ENCODE measurements at regions of chr9 and their contacts with region 1.

Region 1: DNA sequence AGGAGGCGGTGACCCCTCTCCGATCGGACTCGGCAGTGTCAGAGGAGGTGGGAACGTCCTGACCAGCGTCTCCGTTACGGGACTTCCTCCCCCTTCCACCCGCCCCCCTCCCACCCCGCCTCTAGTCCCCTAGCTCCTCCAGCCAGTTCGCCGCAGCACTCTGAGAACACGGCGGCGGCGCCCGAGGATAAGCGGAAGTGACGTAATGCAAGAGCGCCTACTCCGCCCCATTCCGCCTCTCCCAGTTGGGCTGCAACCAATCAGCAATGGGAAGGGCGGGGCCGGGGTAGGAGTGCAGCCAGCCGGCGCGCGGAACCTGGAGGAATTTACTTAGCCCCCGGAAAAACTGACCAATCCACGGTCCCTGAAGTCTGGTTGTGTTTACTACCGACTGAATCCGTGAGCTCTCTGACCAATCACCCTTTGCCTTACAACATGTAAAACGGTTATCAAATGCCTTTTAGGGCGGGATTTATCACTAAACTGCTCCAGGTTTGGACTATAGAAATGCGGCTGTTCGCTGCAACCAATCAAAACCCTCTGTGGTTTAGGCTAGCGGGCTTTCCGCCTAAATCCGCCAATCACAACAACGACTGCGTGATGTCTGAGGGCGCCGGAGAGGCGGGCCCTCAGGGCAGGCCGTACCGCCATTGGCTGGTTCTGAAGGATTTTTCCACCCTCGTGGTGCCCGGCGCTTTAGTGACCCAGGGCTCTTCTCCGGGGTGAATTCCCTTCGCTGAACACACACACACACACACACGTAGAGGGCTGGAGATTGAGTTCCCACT is at the start of gene ZBTB5:
- DNase-seq: peak; percentile 99
- H3K4me3 Mint-ChIP-seq: peak within 1 kb of the TSS; percentile 99
- H3K27ac Mint-ChIP-seq: peak within 1 kb of the TSS; percentile 98
- H3K4me1 Mint-ChIP-seq: peaks cover 35% of the 10 kb centered on the region
- H3K27me3 Mint-ChIP-seq: no peaks in the 10 kb centered on the region
- total RNA-seq, gene ZBTB5: 9.2 and 9.5 TPM in 2 replicates

Region 2: GRCh38 chr9:36991516-36992134 is 473.8 kb before region 1 on chr9:
- intact Hi-C with region 1: no loop called
- DNase-seq: peak; percentile 78
- H3K4me3 Mint-ChIP-seq: no peak overlapping the region
- H3K27ac Mint-ChIP-seq: no peak overlapping the region
- H3K4me1 Mint-ChIP-seq: peaks cover 8% of the 10 kb centered on the region
- H3K27me3 Mint-ChIP-seq: peaks cover 46% of the 10 kb centered on the region

Region 3: DNA sequence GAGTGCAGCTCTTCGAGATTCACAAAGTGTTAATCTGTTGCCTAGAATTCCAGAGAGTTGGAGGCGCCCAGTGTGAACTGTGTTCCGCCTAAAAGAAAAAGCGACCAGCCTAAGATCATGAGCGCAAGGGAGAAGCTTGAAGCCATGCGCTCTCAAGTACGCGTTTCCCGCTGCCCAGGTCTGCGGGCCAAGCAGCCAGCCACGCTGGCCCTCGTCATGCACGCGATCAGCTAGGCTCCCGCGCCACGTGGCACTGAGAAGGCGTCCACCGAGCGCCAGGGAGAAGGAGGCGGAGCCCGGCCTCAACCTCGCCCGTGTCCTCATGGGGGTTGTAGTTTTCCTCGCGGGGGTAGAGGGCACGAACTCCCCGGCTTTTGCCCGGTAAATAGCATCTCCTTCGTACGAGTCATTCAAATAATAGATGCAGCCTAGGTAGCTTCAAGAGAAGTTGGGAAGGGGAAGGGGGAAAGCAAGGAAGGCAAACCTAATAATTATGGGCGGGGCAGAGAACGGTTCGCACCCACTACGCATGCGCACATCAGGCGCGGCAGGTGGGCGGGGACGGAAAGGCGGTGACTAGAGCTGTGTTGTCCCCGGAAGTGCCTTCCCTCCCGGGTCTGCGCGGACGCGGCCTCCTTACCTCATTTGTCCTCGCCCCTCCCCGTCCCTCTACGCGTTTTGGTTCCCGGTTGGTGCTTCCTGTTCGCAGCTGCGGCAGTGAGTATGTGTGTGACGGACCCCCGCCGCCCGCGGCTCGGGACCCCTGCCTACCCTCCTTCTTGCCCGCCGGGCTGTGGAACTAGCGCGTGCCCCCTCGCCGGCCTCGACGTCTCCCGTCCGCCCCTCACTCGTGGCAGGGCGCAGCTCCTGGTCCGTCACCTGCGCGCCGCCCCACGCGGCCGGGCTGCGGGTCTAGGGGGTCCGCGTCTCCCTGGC is 345.3 kb before region 1 on chr9 and contains the start of gene ZCCHC7:
- intact Hi-C with region 1: loop called (anchors 1 kb)
- DNase-seq: peak; percentile 97
- H3K4me3 Mint-ChIP-seq: peak within 1 kb of the TSS; percentile 92
- H3K27ac Mint-ChIP-seq: peak within 1 kb of the TSS; percentile 98
- H3K4me1 Mint-ChIP-seq: peaks cover 17% of the 10 kb centered on the region
- H3K27me3 Mint-ChIP-seq: no peaks in the 10 kb centered on the region
- total RNA-seq, gene ZCCHC7: 24.2 and 25.3 TPM in 2 replicates

Region 4: GRCh38 chr9:37422289-37423104 is 42.9 kb before region 1 on chr9 and contains the start of gene GRHPR:
- intact Hi-C with region 1: loop called (anchors 1 kb)
- DNase-seq: peak; percentile 97
- H3K4me3 Mint-ChIP-seq: peak within 1 kb of the TSS; percentile 96
- H3K27ac Mint-ChIP-seq: peak within 1 kb of the TSS; percentile 97
- H3K4me1 Mint-ChIP-seq: peaks cover 18% of the 10 kb centered on the region
- H3K27me3 Mint-ChIP-seq: no peaks in the 10 kb centered on the region
- total RNA-seq, gene GRHPR: 72.5 and 76.5 TPM in 2 replicates

Region 5: GRCh38 chr9:37753489-37754190 is 288.2 kb after region 1 on chr9 and contains the start of gene TRMT10B:
- intact Hi-C with region 1: loop called (anchors 1 kb)
- DNase-seq: peak; percentile 92
- H3K4me3 Mint-ChIP-seq: peak within 1 kb of the TSS; percentile 99
- H3K27ac Mint-ChIP-seq: peak within 1 kb of the TSS; percentile 97
- H3K4me1 Mint-ChIP-seq: peaks cover 22% of the 10 kb centered on the region
- H3K27me3 Mint-ChIP-seq: no peaks in the 10 kb centered on the region
- total RNA-seq, gene TRMT10B: 12.4 and 13.2 TPM in 2 replicates